ENCODE measurements at regions of chr2 and their contacts with region 1.

Region 1: DNA sequence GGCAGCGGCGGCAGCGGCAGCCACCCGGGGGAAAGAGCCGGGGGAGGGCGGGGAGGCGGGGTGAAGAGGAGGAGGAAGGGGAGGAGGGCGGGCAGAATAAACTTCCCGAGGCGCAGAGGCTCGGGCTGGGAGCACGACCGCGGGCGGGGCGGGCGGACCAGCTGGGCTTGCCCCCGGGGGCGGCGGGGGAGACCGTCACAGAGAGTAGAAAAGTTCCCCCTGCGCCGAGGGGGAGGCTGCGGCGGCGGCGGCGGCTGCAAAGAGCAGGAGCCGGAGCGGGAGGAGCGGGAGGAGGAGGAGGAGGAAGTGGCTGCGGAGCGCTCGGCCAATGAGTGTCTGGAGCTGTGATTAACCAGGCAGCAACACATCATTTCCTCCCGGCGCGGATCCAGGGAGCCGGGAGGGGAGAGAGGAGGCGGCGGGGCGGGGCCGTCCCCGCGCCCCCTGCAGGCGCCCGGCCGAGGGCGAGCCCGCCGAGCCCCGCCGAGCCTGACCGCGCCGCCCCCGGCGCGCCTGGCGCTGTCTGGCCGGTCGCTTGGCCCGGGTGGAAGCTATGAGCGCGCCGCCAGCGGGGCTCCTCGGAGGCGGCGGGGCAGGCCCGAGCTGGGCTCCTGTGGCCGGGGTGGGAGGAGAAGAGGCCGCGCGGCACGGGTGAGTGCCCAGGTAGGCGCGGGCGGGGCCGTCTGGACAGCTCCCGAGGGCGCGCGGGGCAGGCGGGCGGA is at the start of gene ACVR1:
- DNase-seq: peak; percentile 87
- H3K4me3 ChIP-seq: peak within 1 kb of the TSS; percentile 85
- H3K27ac ChIP-seq: no peak within 1 kb of the TSS
- H3K4me1 ChIP-seq: peaks cover 15% of the 10 kb centered on the region
- CTCF ChIP-seq: no peak; the same call in 1 of the 2 replicates
- total RNA-seq, gene ACVR1: 0.13 and 1.6 TPM in 2 replicates

Region 2: DNA sequence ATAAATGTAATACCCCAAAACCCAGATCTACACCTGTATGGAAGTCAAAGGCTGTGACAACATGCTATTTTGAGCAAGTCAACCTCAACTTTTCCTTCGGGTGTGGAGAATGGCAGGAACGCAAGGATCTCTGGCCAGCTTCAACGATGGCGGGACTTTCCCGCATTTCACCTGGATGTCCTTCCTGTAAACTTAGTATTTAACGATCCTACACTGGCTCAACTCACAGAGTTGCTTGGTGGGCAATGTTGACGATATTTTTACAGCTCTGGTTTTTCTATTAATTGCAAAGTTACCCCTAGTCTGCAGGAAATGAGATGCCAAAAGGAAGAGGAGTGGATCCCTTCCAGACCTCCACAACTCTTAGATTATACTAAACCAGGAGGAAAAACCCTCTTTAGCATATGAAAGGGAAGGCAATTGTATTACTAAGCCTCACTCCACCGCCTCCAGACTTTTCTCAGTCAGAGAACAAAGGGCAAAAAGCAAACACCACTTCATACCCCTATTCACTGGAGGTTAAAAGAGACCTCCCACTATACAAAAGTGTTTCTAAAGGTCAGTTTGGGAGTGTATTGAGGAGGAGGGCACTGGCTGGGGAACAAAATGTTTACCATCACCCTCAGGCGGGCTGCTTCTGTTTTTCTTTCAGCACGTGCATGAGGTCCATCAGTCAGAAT is 56.4 kb after region 1 on chr2:
- CTCF ChIA-PET with region 1: no interaction called
- POLR2A ChIA-PET with region 1: no interaction called
- intact Hi-C with region 1: no loop called
- DNase-seq: no peak
- H3K4me3 ChIP-seq: no peak overlapping the region
- H3K27ac ChIP-seq: no peak overlapping the region
- H3K4me1 ChIP-seq: no peaks in the 10 kb centered on the region
- CTCF ChIP-seq: no peak

Region 3: DNA sequence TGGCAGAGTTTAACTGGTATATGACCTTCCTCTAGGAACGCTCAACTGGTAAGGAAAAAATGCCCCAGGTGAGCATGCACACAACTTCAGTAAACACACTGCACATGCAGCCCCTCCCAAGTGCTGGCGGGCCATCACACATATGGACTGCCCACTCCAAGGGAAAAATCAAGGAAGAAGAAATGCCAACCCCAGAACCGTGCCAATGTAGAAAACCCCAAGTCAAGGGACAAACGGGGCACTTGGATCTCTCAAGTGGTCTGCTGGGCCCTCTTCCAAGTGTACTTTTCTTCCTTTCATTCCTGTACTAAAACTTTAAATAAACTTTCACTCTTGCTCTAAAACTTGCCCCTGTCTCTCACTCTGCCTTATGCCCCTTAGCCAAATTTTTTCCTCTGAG is 76.3 kb after region 1 on chr2:
- CTCF ChIA-PET with region 1: no interaction called
- POLR2A ChIA-PET with region 1: interaction called, 11 read pairs
- intact Hi-C with region 1: no loop called
- DNase-seq: no peak
- H3K4me3 ChIP-seq: no peak overlapping the region
- H3K27ac ChIP-seq: no peak overlapping the region
- H3K4me1 ChIP-seq: no peaks in the 10 kb centered on the region
- CTCF ChIP-seq: no peak

Region 4: DNA sequence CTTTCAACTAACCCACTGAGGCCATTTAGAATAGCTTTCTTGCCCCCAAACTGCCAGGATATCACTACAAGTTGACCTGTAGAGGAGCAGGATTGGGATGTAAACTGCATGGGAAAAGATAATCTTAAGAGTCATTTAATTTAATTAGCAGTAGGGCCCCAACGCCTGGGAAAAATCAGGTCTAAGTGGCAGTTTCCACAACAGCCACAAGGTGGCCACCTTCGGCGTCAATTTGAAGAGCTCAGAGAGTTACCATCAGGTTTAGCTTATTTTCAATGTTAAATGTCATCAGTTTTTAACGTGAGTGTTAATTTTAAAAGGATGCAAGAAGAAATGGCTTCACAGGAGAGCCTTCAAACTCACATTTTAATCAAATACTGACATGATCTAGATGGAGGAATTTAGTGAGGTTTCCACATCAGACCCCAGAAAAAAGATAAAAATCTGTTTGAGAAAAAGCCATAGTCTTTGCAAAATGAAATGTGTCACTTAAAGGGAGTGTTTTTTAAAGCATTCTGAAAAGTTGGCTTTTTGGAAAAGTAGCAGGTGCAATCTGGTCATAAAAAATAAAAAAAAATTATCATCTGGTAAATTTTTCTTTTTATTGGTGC is 148.2 kb after region 1 on chr2:
- CTCF ChIA-PET with region 1: no interaction called
- POLR2A ChIA-PET with region 1: no interaction called
- intact Hi-C with region 1: no loop called
- DNase-seq: peak; percentile 45
- H3K4me3 ChIP-seq: no peak overlapping the region
- H3K27ac ChIP-seq: no peak overlapping the region
- H3K4me1 ChIP-seq: no peaks in the 10 kb centered on the region
- CTCF ChIP-seq: peak; percentile 93

Region 5: DNA sequence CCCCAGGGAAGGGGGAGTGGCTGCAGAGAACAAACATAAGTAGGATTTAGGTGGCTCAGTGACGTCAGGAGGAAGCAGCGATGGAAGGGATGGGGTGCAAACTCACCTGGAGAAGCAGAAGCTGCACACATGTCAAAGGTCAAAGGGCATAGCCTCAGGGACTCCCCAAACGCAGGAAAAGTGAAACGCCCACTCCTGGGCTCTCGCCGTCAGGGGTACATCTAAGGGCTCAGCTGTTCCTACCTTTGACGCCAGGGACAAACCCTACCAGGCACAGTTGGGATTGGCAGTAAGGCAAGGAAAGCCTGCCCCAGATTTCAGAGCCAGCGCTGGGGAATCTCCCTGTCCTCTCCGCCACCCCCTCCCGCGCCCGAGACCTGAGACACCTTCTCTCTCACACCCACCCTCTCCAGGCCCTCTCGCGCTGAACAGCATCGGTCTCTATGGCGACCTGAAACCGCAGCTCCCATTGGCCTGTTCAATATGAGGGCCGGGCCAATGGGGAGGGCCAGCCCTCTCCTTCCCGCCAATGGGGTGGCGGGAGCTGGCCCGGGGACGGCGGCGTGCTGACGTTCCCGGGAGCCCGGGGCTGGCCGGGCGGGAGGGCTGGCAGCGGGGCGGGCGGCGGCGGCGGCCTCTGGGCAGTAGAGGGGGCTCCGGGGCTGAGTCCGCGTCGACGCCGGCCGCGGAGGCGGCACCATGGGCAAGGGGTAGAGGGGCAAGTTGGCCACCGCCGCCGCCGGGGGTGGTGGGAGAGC is 580.3 kb after region 1 on chr2 and contains the starts of genes CCDC148 and PKP4:
- CTCF ChIA-PET with region 1: no interaction called
- POLR2A ChIA-PET with region 1: no interaction called
- intact Hi-C with region 1: loop called (anchors 10 kb)
- DNase-seq: peak; percentile 92
- H3K4me3 ChIP-seq: peak within 1 kb of the TSS; percentile 80
- H3K27ac ChIP-seq: peak within 1 kb of the TSS; percentile 30
- H3K4me1 ChIP-seq: peaks cover 26% of the 10 kb centered on the region
- CTCF ChIP-seq: no peak
- total RNA-seq, gene CCDC148: 0.19 and 1.1 TPM in 2 replicates
- total RNA-seq, gene PKP4: 58.5 and 68.7 TPM in 2 replicates

Region 6: DNA sequence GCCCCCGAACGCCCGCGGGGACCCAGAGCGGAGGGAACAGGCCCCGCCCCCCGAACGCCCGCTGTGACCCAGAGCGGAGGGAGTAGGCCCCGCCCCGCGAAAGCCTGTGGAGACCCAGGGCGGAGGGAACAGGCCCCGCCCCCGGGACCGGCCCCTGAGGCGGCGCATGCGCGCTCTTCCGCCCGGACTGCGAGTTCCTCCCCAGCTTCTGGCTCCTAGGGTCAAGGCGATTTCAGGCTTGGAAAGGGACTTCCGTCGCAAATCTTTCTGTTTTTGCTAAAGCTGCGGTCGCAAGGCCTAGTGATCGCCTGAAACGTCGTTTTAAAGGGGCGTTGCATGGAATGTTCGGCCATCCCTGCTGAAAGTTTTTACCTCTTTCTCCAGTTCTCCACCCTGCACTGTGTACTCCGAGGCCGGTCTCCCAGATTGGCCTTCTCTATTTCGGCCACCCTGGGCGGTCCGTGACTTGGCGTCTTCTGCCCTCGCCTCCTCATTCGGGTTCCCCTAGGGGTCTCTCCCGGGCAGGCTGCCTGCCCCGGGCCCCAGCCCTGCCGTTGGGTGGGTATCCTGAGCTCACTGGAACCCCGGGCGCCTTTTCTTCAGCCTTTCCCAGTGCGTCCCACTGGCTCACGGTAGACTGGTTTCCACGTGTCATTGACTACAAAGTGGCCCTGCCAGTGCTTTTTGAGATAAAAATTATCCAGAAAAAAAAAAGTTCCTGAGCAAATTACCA is 1410.6 kb after region 1 on chr2:
- CTCF ChIA-PET with region 1: no interaction called
- POLR2A ChIA-PET with region 1: no interaction called
- intact Hi-C with region 1: loop called (anchors 5 kb)
- DNase-seq: peak; percentile 97
- H3K4me3 ChIP-seq: peak overlapping the region; percentile 73
- H3K27ac ChIP-seq: no peak overlapping the region
- H3K4me1 ChIP-seq: peaks cover 7% of the 10 kb centered on the region
- CTCF ChIP-seq: no peak

Measured in OCI-LY7 (cell line).